ENCODE measurements at regions of chr4 and their contacts with region 1.

Region 1: GRCh38 chr4:16794816-16795445 is 103.5 kb downstream of the LDB2 start:
- DNase-seq: peak; percentile 29 to 80
- ATAC-seq: peak; percentile 57 to 72 (median 67)
- H3K4me3 ChIP-seq: no peak overlapping the region
- H3K27ac ChIP-seq: peak overlapping the region in 4 of 10 donors; percentile 3 to 28 (median 16)
- H3K4me1 ChIP-seq: peaks cover 0 to 35% (median 7%) of the 10 kb centered on the region in 9 donors
- H3K27me3 ChIP-seq: no peaks in the 10 kb centered on the region
- CTCF ChIP-seq: peak; percentile 48 to 91 (median 83)

Region 2: DNA sequence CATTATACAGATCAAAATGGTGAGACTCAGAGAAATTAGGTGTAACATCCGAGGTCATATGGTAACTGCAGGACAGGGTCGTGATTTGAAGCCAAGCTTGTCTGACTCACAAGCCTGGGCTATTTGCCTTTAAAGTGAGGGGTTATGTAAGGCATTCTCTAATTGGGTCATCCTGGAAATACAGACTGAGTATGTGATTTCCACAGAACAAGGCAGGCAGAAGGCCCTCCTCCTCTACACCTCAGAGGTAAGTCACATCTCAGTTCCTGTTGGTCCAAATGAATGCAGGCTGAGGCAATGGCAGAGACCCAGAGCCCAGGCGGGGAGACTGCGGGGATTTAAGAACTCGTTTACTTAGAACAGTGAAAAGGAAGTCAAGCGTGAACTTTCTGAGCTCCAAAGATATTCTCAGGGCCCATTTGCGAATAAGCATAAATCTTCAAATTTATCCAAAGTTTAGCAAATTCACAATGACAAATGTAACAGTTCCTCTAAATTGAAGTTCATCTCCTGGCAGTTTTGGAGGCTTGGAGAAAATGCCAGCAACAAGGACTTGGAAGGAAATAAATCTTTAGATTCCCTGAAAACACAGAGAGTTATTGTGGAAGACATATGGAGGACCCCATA is 49.8 kb before region 1 on chr4:
- intact Hi-C with region 1: no loop called
- DNase-seq: peak in 1 of 2 donors; percentile 14
- ATAC-seq: peak in 7 of 8 donors; percentile 60 to 93 (median 71)
- H3K4me3 ChIP-seq: no peak overlapping the region
- H3K27ac ChIP-seq: no peak overlapping the region
- H3K4me1 ChIP-seq: peaks cover 0 to 14% (median 0%) of the 10 kb centered on the region in 9 donors
- H3K27me3 ChIP-seq: no peaks in the 10 kb centered on the region
- CTCF ChIP-seq: no peak

Region 3: DNA sequence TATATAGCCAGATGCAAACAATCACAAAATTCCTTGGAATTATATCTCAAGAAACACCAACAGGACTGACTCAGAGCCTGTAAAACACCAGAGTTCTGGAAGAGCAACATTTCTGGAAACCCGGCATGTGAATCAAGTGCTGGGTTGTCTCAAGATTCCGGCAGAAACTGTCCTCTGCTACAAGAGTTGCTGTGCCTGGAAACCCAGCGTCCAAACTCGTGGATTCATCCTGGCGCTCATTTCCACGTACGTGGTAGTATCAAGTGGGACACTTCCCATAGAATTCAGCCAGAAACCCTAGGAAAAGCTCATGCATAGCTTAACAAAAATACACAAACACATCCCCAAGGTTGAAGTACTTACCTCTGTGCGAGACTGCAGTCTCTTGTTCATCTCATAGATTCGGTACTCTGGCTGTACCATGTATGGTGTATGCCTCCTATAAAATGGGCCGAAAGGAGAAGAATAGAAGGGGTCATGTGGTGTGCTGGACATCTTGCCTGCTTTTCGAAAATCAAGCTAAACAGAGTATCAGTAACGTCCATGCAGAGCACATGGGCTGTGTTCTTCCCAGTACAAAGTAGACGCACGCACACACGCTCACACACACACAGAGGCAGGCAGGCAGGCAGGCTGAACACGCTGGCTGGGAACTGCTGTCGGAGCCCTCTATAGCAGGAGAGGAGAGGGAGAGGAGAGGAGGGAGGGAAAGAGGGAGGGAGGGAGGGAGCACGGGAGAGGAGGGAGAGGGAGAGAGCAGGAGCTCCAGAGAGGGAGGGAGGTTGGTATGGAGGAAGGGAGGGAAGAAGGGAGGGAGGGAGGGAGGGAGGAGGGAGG is 103.3 kb after region 1 on chr4 and contains the start of gene LDB2:
- intact Hi-C with region 1: loop called in 3 of 10 experiments (anchors 1 to 10 kb)
- DNase-seq: peak; percentile 65 to 83
- ATAC-seq: peak; percentile 83 to 94 (median 90)
- H3K4me3 ChIP-seq: peak within 1 kb of the TSS; percentile 37 to 69 (median 60)
- H3K27ac ChIP-seq: peak within 1 kb of the TSS; percentile 53 to 86 (median 80)
- H3K4me1 ChIP-seq: peaks cover 0 to 24% (median 9%) of the 10 kb centered on the region in 9 donors
- H3K27me3 ChIP-seq: no peaks in the 10 kb centered on the region
- CTCF ChIP-seq: no peak
- total RNA-seq, gene LDB2: 14.5 to 43.3 (median 23.5) TPM

Region 4: DNA sequence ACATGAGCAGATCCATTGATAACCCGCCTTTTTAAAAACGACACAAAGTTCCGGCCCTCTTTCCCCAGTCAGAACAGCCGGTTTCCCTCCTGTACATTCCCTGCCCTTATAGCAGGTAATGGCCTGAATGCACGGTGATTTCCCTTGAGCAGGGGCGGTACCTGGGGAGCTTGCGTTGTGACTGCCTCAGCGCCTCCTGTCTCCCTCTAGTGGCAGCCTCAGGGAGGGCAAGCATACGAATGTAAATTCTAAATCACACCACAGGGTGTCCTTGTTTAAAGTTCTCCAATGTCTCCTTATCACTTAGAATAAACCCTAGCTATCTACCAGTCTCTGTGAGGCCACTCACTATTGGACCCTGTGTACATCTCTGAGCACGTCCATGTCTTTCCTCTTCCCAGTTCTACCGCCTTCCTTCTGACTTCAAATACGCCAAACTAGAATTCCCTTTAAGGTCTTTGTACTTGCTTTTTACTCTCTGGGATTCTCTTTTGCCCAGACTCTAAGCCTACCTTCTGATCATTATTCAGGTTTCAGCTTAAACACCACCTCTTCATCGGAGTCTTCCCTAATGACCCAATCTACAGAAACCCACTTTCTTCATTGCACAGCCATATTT is 121.9 kb after region 1 on chr4:
- intact Hi-C with region 1: loop called in 4 of 10 experiments (anchors 5 to 10 kb)
- DNase-seq: peak; percentile 19 to 39
- ATAC-seq: peak in 5 of 8 donors; percentile 41 to 68 (median 46)
- H3K4me3 ChIP-seq: no peak overlapping the region
- H3K27ac ChIP-seq: no peak overlapping the region
- H3K4me1 ChIP-seq: no peaks in the 10 kb centered on the region
- H3K27me3 ChIP-seq: no peaks in the 10 kb centered on the region
- CTCF ChIP-seq: peak; percentile 63 to 83 (median 74)

Region 5: DNA sequence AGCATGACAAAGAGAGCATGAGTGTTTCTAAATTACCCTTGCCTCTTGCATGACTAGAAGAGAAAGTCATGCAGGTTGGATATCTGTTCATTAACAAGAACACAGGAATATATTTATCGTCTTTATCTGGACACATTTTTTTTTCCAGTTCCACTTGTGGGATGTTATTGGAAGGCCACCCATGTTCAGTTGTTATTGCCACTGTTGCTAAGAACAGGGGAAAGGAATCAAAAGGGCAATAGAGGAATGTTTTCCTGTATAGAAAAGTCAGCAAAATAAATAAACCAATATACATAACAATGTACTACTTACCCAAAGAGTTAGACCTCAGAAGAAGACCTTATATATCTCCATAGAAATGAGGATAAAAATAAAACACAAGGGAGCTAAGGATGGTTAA is 446.9 kb after region 1 on chr4:
- intact Hi-C with region 1: no loop called
- DNase-seq: no peak
- ATAC-seq: peak in 2 of 8 donors; percentile 37 to 71
- H3K4me3 ChIP-seq: no peak overlapping the region
- H3K27ac ChIP-seq: no peak overlapping the region
- H3K4me1 ChIP-seq: peaks cover 0 to 15% (median 0%) of the 10 kb centered on the region in 9 donors
- H3K27me3 ChIP-seq: no peaks in the 10 kb centered on the region
- CTCF ChIP-seq: no peak

Measured in heart right ventricle (tissue), 16 donors.